Heart left ventricle (tissue), 16 donors: ENCODE measurements at regions of chr1 and their contacts with region 1.

Region 1: GRCh38 chr1:41241782-41242341 is at the start of gene SCMH1:
- DNase-seq: peak; percentile 47 to 79 (median 52)
- ATAC-seq: peak; percentile 9 to 75 (median 51)
- H3K4me3 ChIP-seq: peak within 1 kb of the TSS; percentile 70 to 96 (median 90)
- H3K27ac ChIP-seq: peak within 1 kb of the TSS; percentile 89 to 99 (median 94)
- H3K4me1 ChIP-seq: peaks cover 0 to 49% (median 20%) of the 10 kb centered on the region in 12 donors
- H3K27me3 ChIP-seq: no peaks in the 10 kb centered on the region
- CTCF ChIP-seq: no peak
- POLR2A ChIP-seq: no peak
- total RNA-seq, gene SCMH1: 38.5 to 56.2 (median 43.0) TPM

Region 2: DNA sequence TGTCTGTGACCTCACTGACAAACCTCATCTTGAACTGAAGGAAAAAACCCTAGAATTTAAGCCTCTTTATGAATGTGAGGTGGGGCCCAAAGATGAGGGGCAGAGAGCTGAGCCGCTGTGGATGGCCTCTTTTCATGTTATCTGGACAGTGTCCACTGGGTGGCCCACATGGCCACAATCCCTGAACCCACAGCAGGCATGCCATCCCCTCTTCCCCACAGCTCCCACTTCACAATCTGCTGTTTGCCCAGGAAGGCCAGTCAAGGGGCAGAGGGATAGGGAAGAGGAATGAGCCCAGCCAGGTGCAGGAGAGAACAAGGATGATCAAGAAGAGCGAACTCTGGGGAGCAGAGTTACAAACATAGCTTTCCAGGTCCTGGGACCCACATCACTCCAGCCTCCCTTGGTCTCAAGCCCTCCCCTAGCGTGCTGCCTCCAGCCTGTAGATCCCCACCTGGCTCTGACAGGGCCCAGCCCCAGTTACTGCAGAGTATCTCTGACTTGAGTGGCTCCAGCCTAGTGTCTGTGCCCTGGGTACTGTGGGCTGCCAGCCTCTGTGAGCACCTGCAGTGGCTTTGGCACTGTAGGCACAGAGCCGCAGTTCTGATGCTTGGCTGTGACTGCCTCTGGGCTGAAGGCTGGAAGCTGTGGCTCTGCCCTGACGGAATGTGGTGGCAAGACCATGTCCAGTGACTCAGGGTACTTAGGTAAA is 218.4 kb before region 1 on chr1:
- intact Hi-C with region 1: loop called in 1 of 10 experiments (anchors 10 kb)
- DNase-seq: no peak
- ATAC-seq: no peak
- H3K4me3 ChIP-seq: no peak overlapping the region
- H3K27ac ChIP-seq: no peak overlapping the region
- H3K4me1 ChIP-seq: peaks cover 0 to 17% (median 12%) of the 10 kb centered on the region in 12 donors
- H3K27me3 ChIP-seq: no peaks in the 10 kb centered on the region
- CTCF ChIP-seq: peak in 2 of 12 donors; percentile 13 to 23
- POLR2A ChIP-seq: no peak

Region 3: DNA sequence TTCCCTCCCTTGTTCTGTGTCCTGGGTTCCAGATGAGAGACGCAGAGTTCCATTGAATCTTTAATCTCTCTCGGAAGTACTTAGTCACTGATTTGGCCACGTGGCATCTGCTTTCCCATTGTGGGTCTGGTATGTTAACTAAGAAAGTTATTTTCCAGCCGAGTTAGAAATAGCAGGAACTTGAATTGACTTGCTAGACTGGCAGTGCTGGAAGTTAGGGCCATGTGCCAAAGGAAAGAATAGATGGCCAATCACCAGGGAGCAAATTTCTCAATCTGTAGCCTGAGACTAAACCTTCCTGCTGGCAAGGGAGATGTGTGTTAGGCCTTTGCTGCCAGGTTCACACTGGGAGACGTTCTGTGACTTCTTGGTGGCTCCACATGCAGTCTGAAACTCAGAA is 196.1 kb before region 1 on chr1:
- intact Hi-C with region 1: loop called in 2 of 10 experiments (anchors 10 kb)
- DNase-seq: peak in 4 of 5 donors; percentile 36 to 74 (median 43)
- ATAC-seq: peak; percentile 72 to 90 (median 84)
- H3K4me3 ChIP-seq: peak overlapping the region in 1 of 12 donors; percentile 1
- H3K27ac ChIP-seq: peak overlapping the region in 11 of 12 donors; percentile 25 to 74 (median 58)
- H3K4me1 ChIP-seq: peaks cover 0 to 34% (median 26%) of the 10 kb centered on the region in 12 donors
- H3K27me3 ChIP-seq: no peaks in the 10 kb centered on the region
- CTCF ChIP-seq: no peak
- POLR2A ChIP-seq: no peak

Region 4: DNA sequence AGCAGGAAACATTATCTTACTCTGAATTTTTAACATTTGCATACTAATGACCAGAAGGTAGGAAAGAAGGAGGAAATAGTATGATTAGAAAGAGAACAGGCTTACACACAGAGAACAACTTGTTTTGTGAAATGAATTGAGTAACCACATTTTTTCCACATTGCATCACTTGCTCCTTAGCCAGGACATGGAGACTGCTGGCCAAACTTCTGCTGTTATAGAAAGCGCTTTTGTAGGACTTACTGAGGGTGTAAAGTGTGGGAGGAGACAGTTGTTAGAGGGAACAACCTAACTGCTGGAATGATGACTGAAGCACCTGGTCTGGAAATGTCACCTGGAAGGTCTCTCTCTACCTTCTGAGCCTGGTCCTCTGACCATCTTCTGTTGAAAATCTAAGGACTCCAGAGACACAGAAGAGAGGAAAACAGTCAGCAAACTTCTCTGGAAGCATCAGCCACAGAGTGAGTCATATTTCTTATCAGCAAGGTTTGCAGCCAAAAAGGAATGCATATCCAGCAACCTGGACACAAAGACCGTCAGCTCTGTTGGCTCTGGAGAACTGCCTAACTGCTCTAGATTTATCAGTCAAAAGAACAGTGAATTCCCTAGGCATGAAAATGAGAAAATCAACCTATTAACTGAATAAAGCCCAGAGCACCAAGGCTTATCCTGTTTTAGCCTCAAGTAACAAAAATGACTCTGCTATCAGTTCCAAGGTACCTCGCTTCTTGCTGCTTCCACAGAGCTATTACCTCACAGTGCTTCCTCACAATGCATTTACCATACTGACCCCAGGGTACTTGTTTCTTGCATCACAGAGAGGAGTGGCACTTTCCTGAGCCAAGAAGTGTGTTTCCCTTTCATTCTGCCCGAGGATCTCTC is 132.3 kb before region 1 on chr1:
- intact Hi-C with region 1: loop called in 2 of 10 experiments (anchors 5 to 10 kb)
- DNase-seq: peak in 4 of 5 donors; percentile 35 to 46 (median 40)
- ATAC-seq: peak; percentile 86 to 94 (median 92)
- H3K4me3 ChIP-seq: no peak overlapping the region
- H3K27ac ChIP-seq: peak overlapping the region; percentile 43 to 96 (median 78)
- H3K4me1 ChIP-seq: peaks cover 2 to 30% (median 23%) of the 10 kb centered on the region in 12 donors
- H3K27me3 ChIP-seq: no peaks in the 10 kb centered on the region
- CTCF ChIP-seq: no peak
- POLR2A ChIP-seq: no peak

Region 5: DNA sequence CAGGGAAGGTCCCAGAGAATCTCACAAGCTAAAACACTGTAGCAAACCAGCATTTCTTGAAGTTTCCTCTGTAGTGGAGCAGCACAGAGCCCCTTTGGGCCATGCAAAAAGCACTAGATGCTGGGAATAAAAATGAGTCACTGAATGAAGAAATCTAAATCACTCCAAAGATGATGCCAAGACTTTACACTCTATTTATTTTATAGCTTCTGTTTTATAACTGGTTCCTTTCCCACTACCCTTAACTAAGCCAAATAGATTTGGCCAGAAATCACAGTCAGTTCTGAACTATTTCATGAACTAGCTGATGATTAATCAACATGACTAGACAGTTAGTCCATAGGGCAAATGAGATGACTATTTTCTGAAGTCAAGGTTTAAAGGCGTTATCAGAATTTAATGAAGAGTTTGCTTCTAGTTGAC is 89.2 kb before region 1 on chr1:
- intact Hi-C with region 1: loop called in 1 of 10 experiments (anchors 10 kb)
- DNase-seq: no peak
- ATAC-seq: peak in 3 of 4 donors; percentile 49 to 77 (median 68)
- H3K4me3 ChIP-seq: no peak overlapping the region
- H3K27ac ChIP-seq: peak overlapping the region in 3 of 12 donors; percentile 45 to 70 (median 51)
- H3K4me1 ChIP-seq: peaks cover 0 to 20% (median 7%) of the 10 kb centered on the region in 12 donors
- H3K27me3 ChIP-seq: no peaks in the 10 kb centered on the region
- CTCF ChIP-seq: no peak
- POLR2A ChIP-seq: no peak